ENCODE measurements at regions of chr22 and their contacts with region 1.

Region 1: DNA sequence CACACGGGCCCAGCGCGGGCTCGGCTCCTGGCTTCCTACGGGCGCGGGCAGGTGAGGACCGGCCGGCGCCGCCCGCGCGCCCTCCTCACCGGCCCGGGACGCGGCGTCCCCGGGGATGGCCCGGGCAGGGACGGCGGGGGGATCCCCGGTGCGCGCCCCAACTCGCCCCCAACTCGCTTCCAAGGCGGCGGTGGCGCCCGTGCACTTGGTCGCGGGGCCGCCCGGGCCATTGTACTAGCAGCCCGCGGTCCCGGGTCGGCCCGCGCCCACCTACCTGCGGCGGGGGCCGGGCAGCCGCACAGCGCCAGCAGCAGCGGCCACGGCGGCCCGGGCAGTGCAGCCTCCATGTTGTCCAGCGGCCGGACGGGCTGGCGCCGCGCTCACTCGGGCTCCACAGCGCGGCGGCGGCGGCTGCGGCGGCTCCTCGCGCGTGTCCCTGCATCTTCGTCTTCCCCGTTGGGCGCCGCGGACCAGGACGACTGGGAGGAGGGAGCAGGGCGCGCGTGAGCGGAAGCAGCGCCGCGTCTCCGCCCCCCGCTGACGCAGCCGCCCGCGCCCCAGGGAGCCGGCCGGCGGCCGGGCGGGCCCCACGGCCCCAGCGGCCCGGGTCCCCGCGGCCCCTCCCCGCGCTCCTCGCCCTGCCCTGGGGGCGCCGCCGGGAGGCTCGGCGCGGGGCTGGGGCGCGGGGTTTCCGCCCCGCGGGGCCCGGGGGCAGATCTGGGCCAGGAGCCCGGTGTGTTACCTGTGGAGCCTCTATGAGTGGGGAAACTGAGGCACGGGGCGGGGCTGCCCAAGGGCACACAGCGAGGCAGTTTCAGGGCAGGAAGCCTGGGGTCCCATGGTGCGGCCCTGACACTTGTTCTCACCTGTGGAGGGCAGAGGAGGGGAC is 159.3 kb upstream of the GRK3 start:
- DNase-seq: peak in 1 of 2 experiments; percentile 54
- H3K4me3 ChIP-seq: peak overlapping the region; percentile 83; the same call in 1 of the 2 replicates
- H3K27ac ChIP-seq: no peak overlapping the region
- H3K4me1 ChIP-seq: peaks cover 28% of the 10 kb centered on the region
- H3K27me3 ChIP-seq: no peaks in the 10 kb centered on the region
- CTCF ChIP-seq: no peak

Region 2: GRCh38 chr22:25013607-25014006 is 391.6 kb before region 1 on chr22:
- CTCF ChIA-PET with region 1: no interaction called
- POLR2A ChIA-PET with region 1: no interaction called
- intact Hi-C with region 1: no loop called
- DNase-seq: no peak
- H3K4me3 ChIP-seq: no peak overlapping the region
- H3K27ac ChIP-seq: no peak overlapping the region
- H3K4me1 ChIP-seq: no peaks in the 10 kb centered on the region
- H3K27me3 ChIP-seq: no peaks in the 10 kb centered on the region
- CTCF ChIP-seq: no peak

Region 3: DNA sequence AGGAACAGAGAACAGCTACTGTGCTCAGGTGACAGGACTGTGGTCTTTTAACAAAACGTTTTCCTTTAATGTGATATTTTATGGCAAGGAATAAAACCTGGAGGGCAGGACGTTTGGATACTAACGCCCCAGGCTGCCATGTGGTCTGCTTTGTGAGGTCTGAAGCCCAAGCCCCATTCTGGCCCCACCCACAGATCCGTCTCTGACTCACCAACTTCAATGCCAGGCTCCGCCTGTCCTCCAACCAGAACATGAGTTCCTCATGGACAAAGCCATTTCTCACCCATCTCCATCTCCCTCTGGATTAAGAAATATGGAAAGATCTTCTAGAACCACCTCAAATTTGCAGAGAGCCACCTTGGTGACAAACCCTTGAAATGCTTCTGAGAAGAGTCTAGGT is 36.9 kb before region 1 on chr22:
- CTCF ChIA-PET with region 1: no interaction called
- POLR2A ChIA-PET with region 1: no interaction called
- intact Hi-C with region 1: loop called (anchors 1 kb)
- DNase-seq: peak in 1 of 2 experiments; percentile 58
- H3K4me3 ChIP-seq: no peak overlapping the region
- H3K27ac ChIP-seq: no peak overlapping the region
- H3K4me1 ChIP-seq: no peaks in the 10 kb centered on the region
- H3K27me3 ChIP-seq: no peaks in the 10 kb centered on the region
- CTCF ChIP-seq: no peak

Region 4: GRCh38 chr22:25419237-25420113 is 14.3 kb after region 1 on chr22:
- CTCF ChIA-PET with region 1: no interaction called
- POLR2A ChIA-PET with region 1: interaction called, 13 read pairs
- intact Hi-C with region 1: no loop called
- DNase-seq: peak in 1 of 2 experiments; percentile 49
- H3K4me3 ChIP-seq: peak overlapping the region; percentile 39; the same call in 1 of the 2 replicates
- H3K27ac ChIP-seq: no peak overlapping the region
- H3K4me1 ChIP-seq: peaks cover 26% of the 10 kb centered on the region
- H3K27me3 ChIP-seq: no peaks in the 10 kb centered on the region
- CTCF ChIP-seq: no peak

Region 5: DNA sequence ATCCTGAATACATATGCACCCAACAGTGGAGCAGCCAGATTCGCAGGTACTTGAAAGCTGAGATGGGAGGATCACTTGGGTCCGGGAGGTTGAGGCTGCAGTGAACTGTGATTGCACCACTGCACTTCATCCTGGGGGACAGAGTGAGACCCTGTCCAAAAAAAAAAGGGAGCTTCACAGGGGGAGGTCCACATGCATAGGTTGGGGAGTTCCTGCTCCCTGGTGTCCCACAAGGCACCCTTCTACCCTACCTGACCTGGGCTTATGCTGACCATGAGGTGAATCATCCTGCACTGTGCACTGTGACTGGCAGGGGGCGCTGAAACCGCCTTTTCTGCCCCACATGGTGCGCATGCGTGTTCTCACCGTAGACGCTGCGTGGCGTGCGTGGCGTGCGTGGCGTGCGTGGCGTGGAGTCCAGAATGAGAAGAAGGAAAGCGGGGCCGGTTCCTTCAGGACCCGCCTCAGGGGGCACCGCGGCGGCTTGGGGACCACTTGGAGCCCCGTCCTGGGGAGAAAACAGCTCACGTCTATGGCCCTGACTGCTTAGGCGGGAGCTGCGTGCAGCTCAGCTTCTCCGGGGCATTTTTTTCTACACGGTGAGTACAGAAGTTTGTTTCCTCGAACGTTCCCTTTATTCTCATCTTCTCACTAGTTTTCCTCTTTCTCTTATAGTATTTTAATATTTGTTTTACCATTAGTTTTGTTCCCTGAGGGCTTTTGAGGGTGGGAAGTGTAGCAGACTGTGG is 42.7 kb after region 1 on chr22:
- CTCF ChIA-PET with region 1: interaction called, 3 read pairs
- POLR2A ChIA-PET with region 1: no interaction called
- intact Hi-C with region 1: loop called (anchors 5 kb)
- DNase-seq: peak; percentile 66 to 68
- H3K4me3 ChIP-seq: peak overlapping the region; percentile 77
- H3K27ac ChIP-seq: no peak overlapping the region
- H3K4me1 ChIP-seq: peaks cover 13% of the 10 kb centered on the region
- H3K27me3 ChIP-seq: no peaks in the 10 kb centered on the region
- CTCF ChIP-seq: peak; percentile 84